Motor neuron (in vitro differentiated cells): ENCODE measurements at regions of chr4 and their contacts with region 1.

Region 1: GRCh38 chr4:176377780-176378179 is 58.0 kb downstream of the SPCS3 start:
- ATAC-seq: peak in 5 of 8 experiments; percentile 10 to 55 (median 22)
- H3K4me3 ChIP-seq: no peak overlapping the region
- H3K27ac ChIP-seq: no peak overlapping the region
- H3K4me1 ChIP-seq: peaks cover 0 to 11% of the 10 kb centered on the region in 2 donors

Region 2: GRCh38 chr4:176563591-176563990 is 185.8 kb after region 1 on chr4:
- in situ Hi-C with region 1: loop called in 2 of 9 experiments (anchors 25 kb)
- ATAC-seq: peak; percentile 37 to 79 (median 62)
- H3K4me3 ChIP-seq: no peak overlapping the region
- H3K27ac ChIP-seq: no peak overlapping the region
- H3K4me1 ChIP-seq: peaks cover 0 to 7% of the 10 kb centered on the region in 2 donors

Region 3: DNA sequence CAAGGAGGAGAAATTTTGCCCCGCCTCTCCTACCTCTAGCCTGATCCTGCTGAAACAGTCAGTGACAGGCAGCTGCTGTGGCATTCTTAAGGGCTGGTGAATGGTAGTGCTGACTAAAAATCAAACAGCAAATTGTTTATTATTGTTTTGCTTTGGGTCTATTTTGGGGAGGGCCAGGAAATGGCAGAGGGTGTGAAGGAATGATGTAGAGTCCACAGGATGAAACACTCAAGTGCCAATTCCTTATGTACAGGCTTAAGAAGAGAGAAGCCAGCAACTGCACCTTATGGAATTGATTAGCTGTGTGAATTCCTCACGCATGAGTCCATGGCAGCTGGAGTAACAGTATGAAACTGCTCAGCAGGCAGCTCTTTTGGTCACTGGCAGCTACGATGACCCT is 375.3 kb after region 1 on chr4:
- in situ Hi-C with region 1: loop called in 1 of 9 experiments (anchors 25 kb)
- ATAC-seq: peak; percentile 52 to 97 (median 78)
- H3K4me3 ChIP-seq: no peak overlapping the region
- H3K27ac ChIP-seq: no peak overlapping the region
- H3K4me1 ChIP-seq: peaks cover 3% of the 10 kb centered on the region in 2 donors

Region 4: GRCh38 chr4:176789955-176790354 is 412.2 kb after region 1 on chr4:
- in situ Hi-C with region 1: loop called in 1 of 9 experiments (anchors 25 kb)
- ATAC-seq: peak in 4 of 8 experiments; percentile 5 to 35 (median 26)
- H3K4me3 ChIP-seq: no peak overlapping the region
- H3K27ac ChIP-seq: no peak overlapping the region
- H3K4me1 ChIP-seq: peaks cover 0 to 4% of the 10 kb centered on the region in 2 donors

Region 5: GRCh38 chr4:177047070-177047850 is 669.5 kb after region 1 on chr4:
- in situ Hi-C with region 1: loop called in 1 of 9 experiments (anchors 25 kb)
- ATAC-seq: peak; percentile 73 to 98 (median 84)
- H3K4me3 ChIP-seq: no peak overlapping the region
- H3K27ac ChIP-seq: no peak overlapping the region
- H3K4me1 ChIP-seq: no peaks in the 10 kb centered on the region

Region 6: GRCh38 chr4:177131736-177132135 is 754.0 kb after region 1 on chr4:
- in situ Hi-C with region 1: no loop called
- ATAC-seq: no peak
- H3K4me3 ChIP-seq: no peak overlapping the region
- H3K27ac ChIP-seq: no peak overlapping the region
- H3K4me1 ChIP-seq: no peaks in the 10 kb centered on the region

Region 7: GRCh38 chr4:177339477-177340374 is 961.9 kb after region 1 on chr4:
- in situ Hi-C with region 1: loop called in 1 of 9 experiments (anchors 25 kb)
- ATAC-seq: peak in 4 of 8 experiments; percentile 27 to 93 (median 88)
- H3K4me3 ChIP-seq: no peak overlapping the region
- H3K27ac ChIP-seq: no peak overlapping the region
- H3K4me1 ChIP-seq: no peaks in the 10 kb centered on the region